RWPE1 (cell line): ENCODE measurements at regions of chr16 and their contacts with region 1.

Region 1: DNA sequence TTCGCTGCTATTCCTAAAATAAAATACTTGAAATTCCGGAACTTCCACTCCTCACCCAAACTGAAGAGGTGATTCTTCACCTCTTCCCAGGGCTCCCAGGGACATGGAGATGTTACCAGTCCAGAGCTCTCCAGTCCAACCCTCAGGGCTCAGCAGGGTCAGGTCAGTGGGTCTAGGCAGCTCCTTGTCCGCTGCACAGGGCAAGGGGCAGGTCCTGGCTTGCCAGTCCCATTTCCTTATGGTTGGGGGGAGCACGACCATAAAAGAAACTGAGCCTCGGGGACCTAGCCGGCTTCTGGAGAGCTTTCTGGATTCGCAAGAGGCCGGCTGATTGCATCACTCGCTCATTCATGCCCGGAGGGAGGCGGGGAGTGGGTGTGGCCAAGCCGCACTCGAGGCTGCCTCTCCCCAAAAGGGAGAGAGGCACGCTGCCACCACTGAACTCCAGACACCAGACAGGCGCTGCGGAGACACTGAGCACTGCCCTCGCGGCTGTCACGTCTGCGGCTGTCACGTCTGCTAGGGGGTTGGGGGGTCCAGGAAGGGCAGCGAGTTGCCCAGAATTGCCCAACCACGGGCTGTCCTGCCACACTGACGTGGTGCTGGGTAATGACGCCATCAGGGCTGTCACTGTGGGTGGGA is 15.8 kb downstream of the SLC7A5 start:
- DNase-seq: peak; percentile 95
- H3K27ac ChIP-seq: peak overlapping the region; percentile 98
- CTCF ChIP-seq: no peak

Region 2: DNA sequence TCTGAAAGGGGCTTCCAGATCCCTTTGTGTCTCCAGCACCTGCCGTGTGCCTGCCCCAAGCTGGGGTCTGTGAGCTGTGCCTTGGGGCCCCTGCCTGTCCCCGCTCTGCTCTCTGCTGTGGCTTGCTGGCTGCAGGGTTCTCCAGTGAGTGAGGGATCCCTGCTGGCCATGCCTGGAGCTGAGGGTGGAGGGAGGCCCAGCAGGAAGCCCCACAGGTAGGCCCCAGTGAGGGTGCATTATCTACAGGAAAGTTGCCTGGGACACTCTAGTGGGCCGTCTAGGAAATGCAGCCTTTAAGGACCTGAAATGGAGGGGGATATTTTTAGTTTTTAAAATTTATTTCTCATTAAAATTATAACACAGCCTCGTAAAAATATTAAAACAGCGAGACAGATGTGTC is 200.3 kb before region 1 on chr16:
- CTCF ChIA-PET with region 1: no interaction called
- POLR2A ChIA-PET with region 1: no interaction called
- DNase-seq: peak; percentile 21
- H3K27ac ChIP-seq: no peak overlapping the region
- CTCF ChIP-seq: peak; percentile 19; the same call in 1 of the 2 replicates

Region 3: DNA sequence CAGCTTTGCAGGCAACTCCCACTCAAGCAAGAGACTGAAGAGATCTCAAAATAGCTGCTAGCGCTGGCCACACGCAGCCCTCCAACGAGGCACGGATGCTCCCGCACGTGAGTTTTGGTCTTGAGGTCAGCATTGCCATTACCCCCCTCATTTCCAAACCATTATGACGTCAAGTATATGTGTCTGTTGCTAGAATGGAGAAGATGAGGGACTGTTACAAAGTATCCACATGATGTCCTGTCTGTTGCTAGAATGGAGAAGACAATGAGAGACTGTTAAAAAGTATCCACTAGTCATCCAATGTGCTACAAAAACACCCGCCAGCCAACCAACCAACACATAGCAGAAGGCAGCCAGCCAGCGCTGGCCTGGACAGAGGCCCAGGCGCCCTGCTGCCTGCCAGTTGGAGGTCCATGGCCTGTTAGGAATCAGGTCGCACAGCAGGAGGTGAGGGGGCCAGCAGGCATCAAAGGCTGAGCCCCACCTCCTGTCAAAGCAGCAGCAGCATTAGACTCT is 112.6 kb before region 1 on chr16:
- CTCF ChIA-PET with region 1: no interaction called
- POLR2A ChIA-PET with region 1: no interaction called
- DNase-seq: no peak
- H3K27ac ChIP-seq: peak overlapping the region; percentile 49
- CTCF ChIP-seq: no peak

Region 4: GRCh38 chr16:87834623-87835407 is 18.7 kb before region 1 on chr16:
- CTCF ChIA-PET with region 1: interaction called, 17 read pairs
- POLR2A ChIA-PET with region 1: no interaction called
- DNase-seq: no peak
- H3K27ac ChIP-seq: peak overlapping the region; percentile 98
- CTCF ChIP-seq: no peak

Region 5: GRCh38 chr16:87864331-87864989 is 10.9 kb after region 1 on chr16:
- CTCF ChIA-PET with region 1: interaction called, 48 read pairs
- POLR2A ChIA-PET with region 1: interaction called, 4 read pairs
- DNase-seq: no peak
- H3K27ac ChIP-seq: peak overlapping the region; percentile 98
- CTCF ChIP-seq: no peak